ENCODE measurements at regions of chr6 and their contacts with region 1.

Region 1: DNA sequence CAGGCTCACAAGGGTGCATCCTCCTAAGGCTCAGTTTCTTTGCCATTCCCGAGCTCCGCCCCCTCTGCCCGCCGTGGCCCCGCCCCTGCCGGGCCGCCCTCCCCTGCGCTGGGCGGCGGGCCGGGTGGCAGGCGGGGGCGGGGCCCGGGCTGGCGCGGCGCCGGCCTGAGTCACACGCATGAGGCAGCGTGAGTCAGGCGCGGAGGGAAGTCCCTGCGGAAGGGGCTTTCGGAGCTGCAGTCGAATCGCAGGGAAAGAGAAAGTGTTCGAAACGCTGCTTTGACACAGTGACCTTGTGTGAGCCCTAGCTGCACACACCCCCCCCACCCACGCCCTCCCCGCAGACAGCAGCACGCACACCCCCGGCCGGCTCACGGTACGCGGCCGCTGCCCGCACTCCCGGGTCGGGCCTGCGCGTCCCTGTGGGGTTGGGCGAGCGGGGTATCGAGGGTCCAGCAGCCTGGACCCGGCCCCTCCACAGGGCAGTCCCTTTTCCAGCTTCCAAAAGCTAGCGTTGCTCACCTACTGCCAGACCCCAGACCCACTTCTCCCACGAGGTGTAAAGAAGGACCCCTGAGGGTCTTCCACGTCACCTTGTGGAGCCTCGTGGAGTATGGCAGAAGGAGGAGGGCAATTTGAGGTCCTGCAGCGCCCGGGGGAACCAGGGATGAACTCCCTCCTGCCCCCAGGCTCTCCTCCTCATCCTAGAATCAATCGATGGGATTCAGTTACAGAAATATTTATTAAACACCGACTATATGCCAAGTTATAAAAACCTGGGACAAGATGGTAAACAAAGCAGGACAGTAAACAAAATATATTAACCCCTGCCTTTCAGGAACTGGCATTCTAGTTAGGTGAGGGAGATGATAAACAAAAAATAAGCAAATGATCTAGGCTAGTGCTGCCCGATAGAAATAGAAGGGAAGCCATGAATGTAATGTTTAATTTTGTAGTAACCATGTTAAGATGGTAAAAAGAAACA is 12.4 kb upstream of the HMGA1 start:
- DNase-seq: peak; percentile 94
- H3K27ac ChIP-seq: peak overlapping the region; percentile 89
- CTCF ChIP-seq: no peak

Region 2: GRCh38 chr6:34236131-34236996 is 12.1 kb after region 1 on chr6 and contains the start of gene HMGA1:
- CTCF ChIA-PET with region 1: interaction called, 3 read pairs
- POLR2A ChIA-PET with region 1: interaction called, 13 read pairs
- DNase-seq: peak; percentile 85
- H3K27ac ChIP-seq: peak within 1 kb of the TSS; percentile 88
- CTCF ChIP-seq: no peak

Region 3: GRCh38 chr6:34284563-34285447 is 60.6 kb after region 1 on chr6:
- CTCF ChIA-PET with region 1: no interaction called
- POLR2A ChIA-PET with region 1: no interaction called
- DNase-seq: no peak
- H3K27ac ChIP-seq: no peak overlapping the region
- CTCF ChIP-seq: no peak